Ovary (tissue), 10 donors: ENCODE measurements at regions of chr6 and their contacts with region 1.

Region 1: GRCh38 chr6:63740709-63741108 is 105.1 kb downstream of the PHF3 start:
- DNase-seq: no peak
- H3K4me3 ChIP-seq: no peak overlapping the region
- H3K27ac ChIP-seq: no peak overlapping the region
- H3K4me1 ChIP-seq: no peaks in the 10 kb centered on the region
- H3K27me3 ChIP-seq: no peaks in the 10 kb centered on the region
- CTCF ChIP-seq: no peak
- EP300 ChIP-seq: no peak
- POLR2A ChIP-seq: no peak

Region 2: DNA sequence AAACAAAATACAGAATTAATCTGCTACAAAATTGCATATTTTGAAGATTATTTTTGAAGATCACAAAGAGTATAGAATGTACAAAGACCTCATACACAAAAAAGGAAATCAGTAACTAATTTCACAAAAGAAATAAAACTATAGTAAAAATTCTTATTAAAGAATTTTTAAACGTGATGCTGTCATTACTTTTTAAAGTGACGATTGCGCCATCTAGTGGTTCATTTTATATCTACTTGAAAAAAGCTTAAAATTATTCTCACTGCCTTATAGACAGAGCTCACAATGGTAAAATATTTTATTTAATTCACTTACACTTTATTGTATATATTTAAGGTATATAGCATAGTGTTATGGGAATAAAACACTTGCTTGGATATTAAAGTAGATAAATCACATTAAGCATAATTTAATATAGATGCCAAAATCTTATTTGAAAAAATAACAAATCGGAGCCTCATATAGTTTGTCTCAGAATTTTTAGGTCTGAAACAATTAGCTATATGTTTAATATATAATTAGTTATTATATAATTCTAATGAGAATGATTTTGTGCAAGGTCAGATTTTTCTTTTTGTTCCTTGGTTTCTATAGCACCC is 23.7 kb after region 1 on chr6:
- intact Hi-C with region 1: no loop called
- DNase-seq: no peak
- H3K4me3 ChIP-seq: no peak overlapping the region
- H3K27ac ChIP-seq: no peak overlapping the region
- H3K4me1 ChIP-seq: no peaks in the 10 kb centered on the region
- H3K27me3 ChIP-seq: no peaks in the 10 kb centered on the region
- CTCF ChIP-seq: peak in 1 of 3 donors; percentile 48
- EP300 ChIP-seq: no peak
- POLR2A ChIP-seq: no peak

Region 3: GRCh38 chr6:64553249-64553786 is 812.6 kb after region 1 on chr6:
- intact Hi-C with region 1: loop called in 1 of 4 experiments (anchors 10 kb)
- DNase-seq: no peak
- H3K4me3 ChIP-seq: no peak overlapping the region
- H3K27ac ChIP-seq: no peak overlapping the region
- H3K4me1 ChIP-seq: no peaks in the 10 kb centered on the region
- H3K27me3 ChIP-seq: no peaks in the 10 kb centered on the region
- CTCF ChIP-seq: no peak
- EP300 ChIP-seq: no peak
- POLR2A ChIP-seq: no peak